ENCODE measurements at regions of chr1 and their contacts with region 1.

Region 1: DNA sequence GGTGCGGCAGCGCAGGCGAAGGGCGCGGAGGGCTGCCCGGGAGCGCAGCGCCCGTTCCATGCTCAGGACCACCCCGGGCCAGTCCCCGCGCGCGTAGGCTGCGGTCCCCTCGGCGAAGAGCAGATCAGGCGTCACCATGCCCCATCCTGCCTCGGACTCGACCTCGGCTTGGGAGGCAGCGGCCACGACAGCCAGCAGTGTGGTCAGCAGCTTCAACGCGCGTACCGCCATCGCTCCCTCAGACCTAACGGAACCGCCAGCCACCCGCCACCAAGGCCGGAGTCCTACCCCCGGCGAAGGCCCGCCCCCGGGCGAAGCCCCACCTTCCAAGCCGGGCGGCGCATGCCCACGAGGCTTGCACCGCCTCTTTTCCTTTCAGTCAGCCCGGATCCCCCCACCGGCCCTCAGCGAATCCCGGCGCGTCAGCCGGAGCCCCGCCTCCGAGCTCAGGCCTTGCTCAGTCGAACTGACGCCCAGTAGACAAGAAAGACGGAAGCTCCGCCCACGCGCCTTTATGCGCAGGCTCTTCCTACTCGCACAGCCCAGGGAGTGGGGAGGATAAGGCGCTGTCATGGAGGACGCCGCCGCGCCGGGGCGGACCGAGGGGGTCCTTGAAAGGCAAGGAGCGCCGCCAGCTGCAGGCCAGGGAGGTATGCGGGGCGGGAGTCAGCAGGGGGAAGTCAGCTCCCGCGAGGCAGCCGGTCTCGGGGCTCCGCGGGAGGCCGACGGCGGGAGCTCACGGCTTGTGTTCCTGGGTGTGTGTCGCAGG is at the starts of genes C1orf50 and P3H1:
- DNase-seq: peak; percentile 100
- H3K4me3 Mint-ChIP-seq: no peak within 1 kb of the TSS
- H3K27ac Mint-ChIP-seq: peak within 1 kb of the TSS; percentile 85
- H3K4me1 Mint-ChIP-seq: peaks cover 36% of the 10 kb centered on the region
- H3K27me3 Mint-ChIP-seq: no peaks in the 10 kb centered on the region
- total RNA-seq, gene C1orf50: 7.1 to 7.2 TPM
- total RNA-seq, gene P3H1: 40.1 to 43.3 TPM

Region 2: GRCh38 chr1:42552636-42553035 is 214.3 kb before region 1 on chr1:
- CTCF ChIA-PET with region 1: no interaction called
- POLR2A ChIA-PET with region 1: no interaction called
- DNase-seq: no peak
- H3K4me3 Mint-ChIP-seq: no peak overlapping the region
- H3K27ac Mint-ChIP-seq: no peak overlapping the region
- H3K4me1 Mint-ChIP-seq: no peaks in the 10 kb centered on the region
- H3K27me3 Mint-ChIP-seq: no peaks in the 10 kb centered on the region

Region 3: GRCh38 chr1:42681741-42682483 is 85.0 kb before region 1 on chr1 and contains the start of gene YBX1:
- CTCF ChIA-PET with region 1: interaction called, 16 read pairs
- POLR2A ChIA-PET with region 1: interaction called, 55 read pairs
- DNase-seq: peak; percentile 96
- H3K4me3 Mint-ChIP-seq: peak within 1 kb of the TSS; percentile 97
- H3K27ac Mint-ChIP-seq: peak within 1 kb of the TSS; percentile 96
- H3K4me1 Mint-ChIP-seq: peaks cover 48% of the 10 kb centered on the region
- H3K27me3 Mint-ChIP-seq: no peaks in the 10 kb centered on the region
- total RNA-seq, gene YBX1: 575 to 580 TPM

Region 4: GRCh38 chr1:42783092-42783491 is 16.2 kb after region 1 on chr1:
- CTCF ChIA-PET with region 1: interaction called, 21 read pairs
- POLR2A ChIA-PET with region 1: interaction called, 24 read pairs
- DNase-seq: no peak
- H3K4me3 Mint-ChIP-seq: no peak overlapping the region
- H3K27ac Mint-ChIP-seq: no peak overlapping the region
- H3K4me1 Mint-ChIP-seq: peaks cover 45% of the 10 kb centered on the region
- H3K27me3 Mint-ChIP-seq: no peaks in the 10 kb centered on the region

Region 5: GRCh38 chr1:42846257-42847110 is 79.6 kb after region 1 on chr1 and contains the start of gene ZNF691:
- CTCF ChIA-PET with region 1: interaction called, 29 read pairs
- POLR2A ChIA-PET with region 1: interaction called, 32 read pairs
- DNase-seq: peak; percentile 91
- H3K4me3 Mint-ChIP-seq: peak within 1 kb of the TSS; percentile 87
- H3K27ac Mint-ChIP-seq: peak within 1 kb of the TSS; percentile 79
- H3K4me1 Mint-ChIP-seq: peaks cover 33% of the 10 kb centered on the region
- H3K27me3 Mint-ChIP-seq: no peaks in the 10 kb centered on the region
- total RNA-seq, gene ZNF691: 10.4 to 12.6 TPM

Region 6: DNA sequence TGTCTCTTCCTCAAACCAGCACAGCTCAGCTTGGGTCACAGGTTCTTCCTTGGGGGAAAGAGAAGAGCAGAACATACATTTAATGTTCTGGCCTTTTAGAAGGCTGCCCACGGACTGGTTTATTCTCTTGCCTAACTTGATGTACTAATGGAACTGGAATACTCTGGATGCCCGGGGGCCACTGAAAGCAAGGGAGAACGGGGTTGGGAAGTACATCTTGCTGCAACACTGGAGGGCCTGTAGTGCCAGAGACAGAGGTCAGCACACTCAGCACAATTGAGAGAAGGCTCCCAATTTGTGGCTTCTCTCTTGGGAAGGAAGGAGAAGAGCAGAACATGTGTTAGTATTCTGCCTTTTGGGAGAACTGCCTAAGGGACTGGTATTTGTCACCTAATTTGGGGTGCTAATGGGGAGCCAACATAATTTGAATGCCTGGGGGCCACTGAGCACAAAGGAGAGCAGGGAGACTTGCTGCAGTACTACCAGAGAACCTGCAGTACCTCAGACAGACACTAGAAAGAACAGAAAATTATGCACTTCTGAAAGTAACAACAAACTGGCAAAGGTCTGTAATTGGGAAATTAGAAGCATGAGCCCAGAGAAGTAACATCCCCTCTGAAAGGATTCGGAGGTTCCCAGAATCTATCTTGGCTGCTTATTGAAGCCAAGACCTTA is 93.6 kb after region 1 on chr1:
- CTCF ChIA-PET with region 1: no interaction called
- POLR2A ChIA-PET with region 1: no interaction called
- DNase-seq: no peak
- H3K4me3 Mint-ChIP-seq: no peak overlapping the region
- H3K27ac Mint-ChIP-seq: no peak overlapping the region
- H3K4me1 Mint-ChIP-seq: no peaks in the 10 kb centered on the region
- H3K27me3 Mint-ChIP-seq: peaks cover 19% of the 10 kb centered on the region

Measured in activated CD4-positive, alpha-beta memory T cell treated with anti-CD3 and anti-CD28 coated beads, Interleukin-2, amount 10 ng/mL, durations not matched to agents 7 days and 5 days (primary cell).